Activated CD8-positive, alpha-beta T cell treated with anti-CD3 and anti-CD28 coated beads for 36 hours (primary cell): ENCODE measurements at regions of chr10 and their contacts with region 1.

Region 1: DNA sequence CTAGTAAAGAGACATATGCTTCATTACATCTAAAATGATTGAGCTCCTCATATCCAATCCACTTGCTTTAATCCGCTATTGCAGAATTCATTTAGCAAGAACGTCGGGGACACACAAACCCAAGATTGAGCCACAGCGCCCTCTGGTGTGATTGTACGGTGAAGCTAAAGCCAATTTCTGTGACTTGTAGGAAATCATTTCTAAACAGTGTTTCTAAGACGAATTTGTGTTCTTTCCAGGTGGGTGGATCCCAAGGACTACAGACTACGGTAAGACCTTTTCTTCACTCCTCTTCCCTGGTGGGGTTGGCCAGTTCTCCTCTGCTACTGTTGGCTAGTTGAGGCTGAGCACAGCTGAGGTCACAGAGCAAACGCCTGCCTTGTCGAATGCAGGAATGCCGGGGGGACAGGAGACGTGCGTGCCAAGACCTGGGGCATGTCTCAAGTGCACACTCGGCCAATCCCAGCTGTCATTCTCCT is 5.2 kb downstream of the DMBT1 start:
- DNase-seq: peak; percentile 87
- ATAC-seq: peak; percentile 34
- H3K4me3 Mint-ChIP-seq: no peak overlapping the region
- H3K27ac Mint-ChIP-seq: no peak overlapping the region
- H3K4me1 Mint-ChIP-seq: peaks cover 7% of the 10 kb centered on the region
- H3K27me3 Mint-ChIP-seq: peaks cover 29% of the 10 kb centered on the region
- CTCF ChIP-seq: peak; percentile 78

Region 2: DNA sequence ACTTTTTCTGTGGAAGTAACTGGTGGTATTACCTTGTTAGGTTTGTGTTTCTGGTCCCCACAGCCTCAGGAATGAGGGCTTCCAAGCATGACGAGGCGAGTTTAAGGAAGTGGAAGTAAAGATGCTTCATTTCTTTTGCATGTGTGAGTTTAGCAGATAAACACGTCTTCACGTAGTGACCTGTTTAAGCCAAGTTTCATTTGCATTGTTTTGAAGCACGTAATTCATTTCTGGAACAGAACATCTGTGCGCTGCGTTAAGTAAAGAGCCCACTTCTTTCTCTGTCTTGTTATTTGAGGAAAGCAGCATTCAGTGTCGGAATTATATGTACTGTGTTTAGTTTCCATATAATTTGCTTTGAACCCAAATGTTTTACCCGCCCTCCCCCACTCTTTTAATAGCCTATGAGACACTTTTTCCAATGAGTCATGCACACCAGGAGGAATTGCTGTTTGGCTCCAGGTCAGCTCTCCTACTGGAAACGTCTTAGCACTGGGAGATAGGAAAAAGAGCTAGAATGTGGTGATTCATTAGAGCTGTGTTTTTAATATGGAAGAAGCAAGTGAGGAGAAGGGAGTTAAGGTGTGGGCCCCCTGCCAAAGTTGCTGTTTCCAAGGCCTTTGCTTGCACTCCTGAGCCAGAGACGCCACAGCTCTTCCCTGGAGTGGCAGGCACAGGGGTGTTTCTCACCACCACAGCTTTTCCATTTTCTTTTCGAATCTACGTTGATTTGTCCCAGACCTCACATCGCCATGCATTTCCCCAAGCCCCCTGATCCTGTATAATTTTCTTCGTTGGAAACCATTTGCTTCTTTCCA is 257.9 kb before region 1 on chr10:
- CTCF ChIA-PET with region 1: interaction called, 11 read pairs
- POLR2A ChIA-PET with region 1: no interaction called
- intact Hi-C with region 1: no loop called
- DNase-seq: no peak
- ATAC-seq: no peak
- H3K4me3 Mint-ChIP-seq: no peak overlapping the region
- H3K27ac Mint-ChIP-seq: no peak overlapping the region
- H3K4me1 Mint-ChIP-seq: no peaks in the 10 kb centered on the region
- H3K27me3 Mint-ChIP-seq: peaks cover 16% of the 10 kb centered on the region
- CTCF ChIP-seq: no peak

Region 3: DNA sequence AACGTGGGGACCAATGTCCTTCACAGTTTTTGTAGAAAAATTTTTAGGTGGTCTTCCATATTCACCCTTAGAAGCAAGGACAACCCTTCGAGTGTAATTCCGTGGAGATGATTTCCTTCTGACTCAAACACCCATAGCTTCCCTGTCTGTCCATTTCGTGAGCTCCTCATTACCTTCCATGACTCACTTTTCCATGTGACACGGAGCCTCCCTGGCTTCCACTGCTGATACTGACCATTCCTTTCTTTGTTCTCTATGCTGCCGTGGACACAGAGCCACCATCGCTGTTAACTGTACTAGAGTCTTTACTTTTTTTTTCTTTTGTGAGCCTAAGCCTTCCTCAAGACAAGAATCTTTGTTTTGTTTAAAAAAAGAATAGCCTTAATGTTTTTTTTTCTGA is 123.8 kb before region 1 on chr10:
- CTCF ChIA-PET with region 1: interaction called, 11 read pairs
- POLR2A ChIA-PET with region 1: no interaction called
- intact Hi-C with region 1: no loop called
- DNase-seq: no peak
- ATAC-seq: no peak
- H3K4me3 Mint-ChIP-seq: no peak overlapping the region
- H3K27ac Mint-ChIP-seq: no peak overlapping the region
- H3K4me1 Mint-ChIP-seq: no peaks in the 10 kb centered on the region
- H3K27me3 Mint-ChIP-seq: peaks cover 2% of the 10 kb centered on the region
- CTCF ChIP-seq: no peak

Region 4: DNA sequence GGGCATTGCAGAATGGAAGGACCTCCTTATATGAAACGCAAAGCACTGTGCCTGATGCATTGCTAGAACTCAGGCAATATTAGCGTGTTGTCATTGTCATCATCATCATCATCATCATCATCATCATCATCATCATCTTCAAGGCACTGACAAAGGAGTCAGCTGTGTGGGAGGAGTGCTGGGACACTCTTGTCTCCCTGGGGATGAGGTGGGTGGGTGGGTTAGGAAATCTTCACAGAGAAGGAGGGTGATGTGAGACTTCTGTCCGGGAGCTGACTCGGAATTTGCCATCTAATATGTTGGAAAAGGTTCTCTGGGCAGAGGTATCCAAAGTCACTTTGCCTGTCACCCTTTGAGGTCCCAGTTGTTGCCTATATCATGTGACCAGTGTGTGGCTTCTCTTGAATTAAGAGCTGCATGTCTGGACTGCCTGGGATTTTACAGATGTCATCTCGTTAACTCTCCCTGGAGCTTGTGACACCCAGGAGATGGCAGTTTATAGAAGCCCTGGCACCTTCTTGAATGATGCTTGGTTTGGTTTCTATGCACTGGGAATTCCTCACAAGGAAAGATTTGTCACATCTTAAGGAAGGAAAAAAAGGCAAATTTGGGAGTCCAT is 97.4 kb before region 1 on chr10:
- CTCF ChIA-PET with region 1: interaction called, 13 read pairs
- POLR2A ChIA-PET with region 1: no interaction called
- intact Hi-C with region 1: no loop called
- DNase-seq: no peak
- ATAC-seq: no peak
- H3K4me3 Mint-ChIP-seq: no peak overlapping the region
- H3K27ac Mint-ChIP-seq: no peak overlapping the region
- H3K4me1 Mint-ChIP-seq: no peaks in the 10 kb centered on the region
- H3K27me3 Mint-ChIP-seq: peaks cover 32% of the 10 kb centered on the region
- CTCF ChIP-seq: no peak

Region 5: DNA sequence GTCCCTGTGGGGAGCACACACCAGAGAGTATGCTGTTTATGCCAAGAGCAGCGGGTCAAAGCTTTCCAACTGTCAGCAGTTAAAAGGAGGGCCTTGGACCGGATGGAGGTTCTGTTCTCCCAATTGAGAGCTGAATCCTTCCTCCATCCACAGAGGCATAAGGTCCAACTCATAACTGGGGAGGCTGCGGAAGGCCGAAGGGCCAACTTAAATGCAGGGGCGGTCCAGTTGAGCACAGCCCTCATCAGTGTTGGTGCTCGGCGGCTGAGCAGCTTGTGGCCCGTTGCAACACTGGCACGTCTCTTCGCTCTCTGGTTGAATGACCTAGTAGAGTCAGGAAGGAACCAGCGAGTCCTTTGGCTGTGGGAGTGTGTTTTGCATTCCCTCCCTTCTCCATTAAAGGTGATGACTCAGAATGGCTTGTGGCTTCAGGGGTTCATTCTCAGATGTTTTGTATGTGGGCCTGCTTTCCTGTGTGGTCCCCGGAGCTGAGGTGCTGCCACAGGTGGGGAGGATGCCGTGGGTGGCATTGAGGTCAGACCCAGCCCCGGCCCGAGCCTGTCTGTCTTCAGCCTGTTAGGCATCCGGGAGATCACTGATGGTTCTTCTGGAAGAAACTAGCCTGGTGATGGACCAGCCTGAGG is 50.1 kb before region 1 on chr10:
- CTCF ChIA-PET with region 1: interaction called, 47 read pairs
- POLR2A ChIA-PET with region 1: interaction called, 3 read pairs
- intact Hi-C with region 1: no loop called
- DNase-seq: peak; percentile 91
- ATAC-seq: peak; percentile 93
- H3K4me3 Mint-ChIP-seq: no peak overlapping the region
- H3K27ac Mint-ChIP-seq: no peak overlapping the region
- H3K4me1 Mint-ChIP-seq: peaks cover 43% of the 10 kb centered on the region
- H3K27me3 Mint-ChIP-seq: peaks cover 9% of the 10 kb centered on the region
- CTCF ChIP-seq: no peak

Region 6: DNA sequence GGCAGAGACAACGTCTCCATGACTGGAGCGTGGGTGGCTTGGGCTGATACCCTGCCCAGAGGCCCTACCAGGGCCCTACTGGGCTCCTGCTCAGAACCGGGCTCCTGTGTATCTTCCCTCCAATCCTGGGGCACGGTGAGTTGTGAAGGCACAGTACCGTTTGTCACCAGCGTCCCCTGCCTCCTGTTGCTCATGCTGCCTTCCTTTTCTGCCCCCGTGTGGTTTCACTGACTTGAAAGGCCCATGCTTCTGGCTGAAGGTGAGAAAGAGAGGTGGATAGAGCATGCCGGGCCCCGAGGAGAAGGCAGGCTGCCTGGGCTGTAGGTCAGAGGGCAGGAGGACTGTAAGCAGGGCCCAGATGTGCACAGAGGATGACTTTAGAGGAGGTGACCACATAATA is 14.3 kb before region 1 on chr10:
- CTCF ChIA-PET with region 1: interaction called, 16 read pairs
- POLR2A ChIA-PET with region 1: no interaction called
- intact Hi-C with region 1: no loop called
- DNase-seq: peak; percentile 79
- ATAC-seq: peak; percentile 96
- H3K4me3 Mint-ChIP-seq: no peak overlapping the region
- H3K27ac Mint-ChIP-seq: peak overlapping the region; percentile 15
- H3K4me1 Mint-ChIP-seq: peaks cover 13% of the 10 kb centered on the region
- H3K27me3 Mint-ChIP-seq: no peaks in the 10 kb centered on the region
- CTCF ChIP-seq: no peak